Activated T-helper 2 cell treated with anti-CD3 and anti-CD28 coated beads, Interferon-gamma antibody, Interleukin-2, Interleukin-4, amounts not matched to agents 10 μg/mL and 5 μg/mL and 100 μg/mL, durations not matched to agents 14 hours and 24 hours and 36 hours (primary cell): ENCODE measurements at regions of chr10 and their contacts with region 1.

Region 1: GRCh38 chr10:32256613-32257437 is 90.1 kb downstream of the EPC1 start:
- DNase-seq: peak; percentile 59
- H3K4me3 Mint-ChIP-seq: no peak overlapping the region
- H3K27ac Mint-ChIP-seq: no peak overlapping the region
- H3K4me1 Mint-ChIP-seq: peaks cover 13% of the 10 kb centered on the region
- H3K27me3 Mint-ChIP-seq: no peaks in the 10 kb centered on the region

Region 2: DNA sequence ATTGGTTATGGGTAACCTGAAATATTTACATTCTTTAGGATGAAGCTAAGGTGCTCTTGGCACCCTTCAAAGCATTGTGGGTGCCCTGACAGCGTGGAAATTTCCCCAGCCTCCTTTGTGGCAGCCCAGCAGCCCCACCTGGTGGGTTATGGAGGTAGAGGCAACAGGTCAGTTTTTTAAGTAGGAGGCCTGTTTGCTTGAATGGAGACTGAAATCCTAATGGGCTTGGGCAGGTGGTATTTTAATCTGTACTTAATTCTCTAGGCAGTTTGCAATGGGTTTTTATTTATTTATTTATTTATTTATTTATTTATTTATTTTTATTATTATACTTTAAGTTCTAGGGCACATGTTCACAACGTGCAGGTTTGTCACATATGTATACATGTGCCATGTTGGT is 49.3 kb before region 1 on chr10:
- intact Hi-C with region 1: no loop called
- DNase-seq: peak; percentile 54
- H3K4me3 Mint-ChIP-seq: no peak overlapping the region
- H3K27ac Mint-ChIP-seq: no peak overlapping the region
- H3K4me1 Mint-ChIP-seq: peaks cover 2% of the 10 kb centered on the region
- H3K27me3 Mint-ChIP-seq: peaks cover 6% of the 10 kb centered on the region

Region 3: GRCh38 chr10:32318476-32318896 is 61.7 kb after region 1 on chr10:
- intact Hi-C with region 1: loop called (anchors 2 kb)
- DNase-seq: no peak
- H3K4me3 Mint-ChIP-seq: peak overlapping the region; percentile 13
- H3K27ac Mint-ChIP-seq: peak overlapping the region; percentile 85
- H3K4me1 Mint-ChIP-seq: peaks cover 54% of the 10 kb centered on the region
- H3K27me3 Mint-ChIP-seq: no peaks in the 10 kb centered on the region

Region 4: DNA sequence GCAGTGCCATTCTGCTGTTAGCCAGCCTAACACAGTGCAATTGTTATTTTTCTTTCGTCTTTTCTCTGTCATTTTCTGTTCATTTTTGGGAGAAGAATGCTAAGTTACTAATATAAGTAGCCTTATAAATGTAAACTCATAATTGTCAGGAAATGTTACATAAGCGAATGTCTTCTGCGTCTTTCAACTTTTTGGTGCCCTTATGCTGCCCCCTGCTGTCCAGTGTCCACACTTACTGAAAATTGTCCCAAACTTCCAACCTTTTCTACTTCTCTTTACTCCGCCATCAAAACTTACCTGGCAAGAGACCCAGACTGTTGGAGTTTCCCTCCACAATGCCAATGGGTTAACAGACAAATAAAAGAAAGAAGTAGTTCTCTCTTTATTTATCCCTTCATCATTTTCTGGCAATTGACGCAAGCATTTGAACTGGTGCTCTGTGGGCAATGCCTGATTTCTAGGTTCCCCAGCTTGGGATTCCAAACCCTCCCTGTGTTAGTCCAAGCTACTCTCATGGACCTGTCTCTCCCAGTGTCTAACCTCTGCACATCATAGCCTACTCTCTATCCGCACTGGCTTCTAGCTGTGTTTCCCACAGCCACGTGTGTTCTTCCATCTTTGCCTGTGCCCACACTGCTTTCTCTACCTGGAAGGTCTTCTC is 111.1 kb after region 1 on chr10:
- intact Hi-C with region 1: loop called (anchors 1 kb)
- DNase-seq: peak; percentile 58
- H3K4me3 Mint-ChIP-seq: no peak overlapping the region
- H3K27ac Mint-ChIP-seq: no peak overlapping the region
- H3K4me1 Mint-ChIP-seq: peaks cover 22% of the 10 kb centered on the region
- H3K27me3 Mint-ChIP-seq: no peaks in the 10 kb centered on the region

Region 5: DNA sequence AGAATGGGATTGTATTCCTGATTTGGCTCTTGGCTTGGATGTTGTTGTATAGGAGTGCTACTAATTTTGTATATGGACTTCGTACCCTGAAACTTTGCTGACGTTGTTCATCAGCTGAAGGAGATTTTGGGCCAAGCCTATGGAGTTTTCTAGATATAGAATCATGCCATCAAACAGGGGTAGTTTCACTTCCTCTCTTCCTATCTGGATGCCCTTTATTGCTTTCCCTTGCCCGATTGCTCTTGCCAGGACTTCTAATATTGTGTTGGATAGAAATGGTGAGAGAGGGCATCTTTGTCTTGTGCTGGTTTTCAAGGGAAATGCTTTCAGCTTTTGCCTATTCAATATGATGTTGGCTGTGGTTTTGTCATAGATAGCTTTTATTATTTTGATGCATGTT is 281.4 kb after region 1 on chr10:
- intact Hi-C with region 1: no loop called
- DNase-seq: no peak
- H3K4me3 Mint-ChIP-seq: no peak overlapping the region
- H3K27ac Mint-ChIP-seq: no peak overlapping the region
- H3K4me1 Mint-ChIP-seq: no peaks in the 10 kb centered on the region
- H3K27me3 Mint-ChIP-seq: peaks cover 2% of the 10 kb centered on the region